Endothelial cell of umbilical vein (primary cell): ENCODE measurements at regions of chrX and their contacts with region 1.

Region 1: DNA sequence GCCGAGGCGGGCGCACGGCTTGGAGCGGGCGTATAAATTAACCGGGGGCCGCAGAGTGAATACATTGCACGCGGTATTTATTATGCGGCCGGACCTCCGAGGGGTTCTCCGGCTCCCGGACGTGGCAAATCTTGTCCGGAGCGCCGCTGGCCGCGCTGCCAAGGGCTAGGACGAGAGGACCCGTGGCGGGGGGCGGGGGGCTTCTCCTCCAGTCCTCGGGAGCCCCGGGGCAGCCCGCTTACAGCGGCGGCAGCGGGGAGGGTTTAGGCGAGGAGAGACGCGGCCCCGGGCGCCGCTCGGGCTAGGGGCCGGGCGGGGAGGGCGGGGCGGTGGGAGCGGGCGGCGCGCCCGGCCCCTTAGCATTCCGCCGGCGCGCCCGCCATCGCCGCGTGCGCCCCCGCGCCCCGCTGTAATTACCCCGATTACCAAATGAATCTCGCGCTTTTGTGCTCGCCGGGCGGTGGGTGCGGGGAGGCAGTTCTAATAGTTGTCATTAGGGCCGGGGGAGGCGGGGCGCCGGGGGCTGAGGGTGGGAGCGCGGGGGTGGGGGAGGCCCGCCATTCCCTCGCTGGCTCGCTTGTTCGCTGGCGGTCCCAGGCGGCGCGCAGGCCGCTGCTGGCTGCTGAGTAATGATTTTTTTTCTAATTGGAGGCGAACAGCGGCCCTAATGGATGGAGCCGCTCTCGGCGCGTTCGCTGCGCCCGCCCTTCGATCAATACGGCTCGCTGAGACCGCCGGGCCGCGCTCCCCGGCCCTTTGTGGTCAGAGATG is 276.6 kb downstream of the BCOR start:
- DNase-seq: peak; percentile 13
- H3K4me3 ChIP-seq: peak overlapping the region in 2 of 3 experiments; percentile 11 to 37
- H3K27ac ChIP-seq: no peak overlapping the region
- H3K4me1 ChIP-seq: peaks cover 7% of the 10 kb centered on the region
- H3K27me3 ChIP-seq: no peaks in the 10 kb centered on the region
- CTCF ChIP-seq: no peak
- POLR2A ChIP-seq: no peak

Region 2: DNA sequence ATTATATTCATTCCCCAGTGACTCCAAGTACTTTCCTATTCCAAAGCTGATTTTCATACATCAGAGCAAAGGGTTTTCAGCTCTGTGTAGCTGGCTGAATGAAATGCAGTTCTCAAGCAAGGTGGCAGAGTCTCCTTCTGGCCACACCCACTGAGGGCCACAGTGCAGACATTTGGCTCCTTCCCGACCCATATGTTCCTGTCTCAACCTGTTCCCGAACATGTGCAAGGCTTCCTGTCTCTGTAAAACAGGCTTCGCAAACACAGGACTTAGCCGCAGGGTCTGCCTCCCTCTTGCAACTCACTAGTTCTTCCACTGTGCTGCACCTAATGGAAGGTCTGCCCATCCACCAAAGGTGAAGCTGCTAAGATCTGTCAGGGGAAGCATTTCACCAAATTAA is 770.7 kb before region 1 on chrX:
- CTCF ChIA-PET with region 1: no interaction called
- POLR2A ChIA-PET with region 1: no interaction called
- dilution Hi-C with region 1: no loop called
- intact Hi-C with region 1: no loop called
- DNase-seq: no peak
- H3K4me3 ChIP-seq: no peak overlapping the region
- H3K27ac ChIP-seq: no peak overlapping the region
- H3K4me1 ChIP-seq: no peaks in the 10 kb centered on the region
- H3K27me3 ChIP-seq: no peaks in the 10 kb centered on the region
- CTCF ChIP-seq: no peak
- POLR2A ChIP-seq: no peak

Region 3: GRCh38 chrX:39675601-39676000 is 145.5 kb before region 1 on chrX:
- CTCF ChIA-PET with region 1: no interaction called
- POLR2A ChIA-PET with region 1: no interaction called
- dilution Hi-C with region 1: no loop called
- intact Hi-C with region 1: no loop called
- DNase-seq: no peak
- H3K4me3 ChIP-seq: no peak overlapping the region
- H3K27ac ChIP-seq: no peak overlapping the region
- H3K4me1 ChIP-seq: no peaks in the 10 kb centered on the region
- H3K27me3 ChIP-seq: no peaks in the 10 kb centered on the region
- CTCF ChIP-seq: no peak
- POLR2A ChIP-seq: no peak

Region 4: DNA sequence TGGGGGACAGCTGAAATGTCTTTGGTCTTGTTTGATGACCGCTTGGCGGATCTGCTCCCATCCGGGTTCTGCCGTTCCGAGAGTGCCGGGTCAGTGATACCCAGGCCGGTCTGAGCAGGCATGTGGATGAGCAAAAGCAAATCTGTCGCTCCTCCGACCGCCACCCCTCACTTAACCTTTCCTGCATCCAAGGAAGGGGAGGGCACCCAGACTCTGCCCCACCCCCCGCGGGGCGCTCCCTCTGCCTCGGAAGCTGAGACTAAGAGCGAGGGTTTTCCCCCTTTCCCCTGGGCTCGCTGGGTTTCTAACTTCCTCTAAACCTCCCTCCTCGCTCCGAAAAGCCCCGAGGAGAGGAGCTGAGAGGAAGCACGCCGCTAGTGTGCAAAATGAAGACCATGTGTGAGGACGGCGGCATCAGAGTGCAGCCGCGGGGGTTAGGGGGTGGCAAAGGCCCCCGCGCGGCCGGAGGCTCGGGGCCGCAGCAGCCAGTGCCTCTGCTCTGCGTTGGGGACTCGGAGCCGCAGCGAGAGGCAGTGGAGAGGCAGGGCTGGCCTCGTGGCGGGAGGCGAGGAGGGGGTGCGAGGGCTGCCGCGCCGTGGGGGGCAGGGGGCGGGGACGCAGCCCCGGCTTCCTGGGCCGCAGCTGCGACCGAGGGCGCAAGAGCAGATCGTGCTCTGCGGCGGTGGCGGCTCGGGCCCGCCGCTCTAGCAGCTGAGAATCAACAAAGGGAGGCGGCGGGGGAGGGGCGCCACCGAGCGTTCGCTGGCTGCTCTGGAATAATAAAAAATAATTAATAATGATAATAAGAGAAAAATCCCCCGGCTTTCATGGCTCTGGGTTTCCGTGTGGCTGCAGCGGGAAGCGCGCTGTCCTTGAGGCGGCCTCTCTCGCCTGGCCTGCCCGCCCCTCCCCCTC is 332.5 kb after region 1 on chrX:
- CTCF ChIA-PET with region 1: no interaction called
- POLR2A ChIA-PET with region 1: no interaction called
- dilution Hi-C with region 1: no loop called
- intact Hi-C with region 1: loop called (anchors 5 kb)
- DNase-seq: no peak
- H3K4me3 ChIP-seq: peak overlapping the region; percentile 7 to 38 (median 15)
- H3K27ac ChIP-seq: peak overlapping the region; percentile 12
- H3K4me1 ChIP-seq: peaks cover 32% of the 10 kb centered on the region
- H3K27me3 ChIP-seq: no peaks in the 10 kb centered on the region
- CTCF ChIP-seq: no peak
- POLR2A ChIP-seq: no peak